ENCODE measurements at regions of chr1 and their contacts with region 1.

Region 1: DNA sequence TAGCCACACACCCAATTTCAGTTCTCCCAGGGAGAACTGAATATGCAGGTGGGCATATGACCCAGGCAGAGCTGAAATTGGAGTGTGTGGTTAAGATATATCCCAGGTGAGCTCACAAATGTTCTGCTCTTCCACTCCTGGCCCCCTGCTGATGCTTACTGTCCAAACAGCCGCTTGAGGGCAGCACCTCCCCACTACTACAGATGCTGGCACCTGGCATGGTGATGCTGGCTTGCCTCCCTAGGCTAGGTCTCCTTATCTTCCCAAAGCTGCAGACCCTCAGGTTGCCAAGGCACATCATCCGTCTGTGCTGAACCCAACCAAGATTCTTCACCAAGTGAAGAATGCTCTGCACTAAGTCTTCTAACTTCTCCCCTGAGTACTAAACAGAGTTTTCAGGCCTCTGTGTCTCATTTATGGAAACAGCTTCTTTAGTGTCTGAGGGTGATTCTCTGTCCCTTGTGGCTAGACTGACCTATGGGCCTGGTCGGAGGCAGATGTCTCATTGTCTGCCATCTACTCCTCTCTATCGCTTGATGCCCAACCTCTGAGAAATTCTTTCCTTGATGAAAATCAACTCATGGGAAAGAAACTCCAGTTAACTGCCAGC is 27.2 kb downstream of the XCL1 start:
- DNase-seq: peak; percentile 53 to 77 (median 54)
- H3K4me3 ChIP-seq: no peak overlapping the region
- H3K4me3 Mint-ChIP-seq: no peak overlapping the region
- H3K27ac ChIP-seq: no peak overlapping the region
- H3K27ac Mint-ChIP-seq: peak overlapping the region in 1 of 8 donors; percentile 22
- H3K4me1 ChIP-seq: no peaks in the 10 kb centered on the region
- H3K4me1 Mint-ChIP-seq: peaks cover 0 to 4% (median 0%) of the 10 kb centered on the region in 3 donors
- H3K27me3 ChIP-seq: no peaks in the 10 kb centered on the region
- H3K27me3 Mint-ChIP-seq: peaks cover 0 to 3% of the 10 kb centered on the region in 2 donors

Region 2: GRCh38 chr1:169348383-169349036 is 744.9 kb after region 1 on chr1:
- CTCF ChIA-PET with region 1: interaction called, 13 read pairs
- POLR2A ChIA-PET with region 1: no interaction called
- DNase-seq: peak in 4 of 5 donors; percentile 6 to 50 (median 42)
- H3K4me3 ChIP-seq: no peak overlapping the region
- H3K4me3 Mint-ChIP-seq: no peak overlapping the region
- H3K27ac ChIP-seq: no peak overlapping the region
- H3K27ac Mint-ChIP-seq: no peak overlapping the region
- H3K4me1 ChIP-seq: no peaks in the 10 kb centered on the region
- H3K4me1 Mint-ChIP-seq: peaks cover 1 to 18% (median 8%) of the 10 kb centered on the region in 3 donors
- H3K27me3 ChIP-seq: no peaks in the 10 kb centered on the region
- H3K27me3 Mint-ChIP-seq: no peaks in the 10 kb centered on the region

Region 3: DNA sequence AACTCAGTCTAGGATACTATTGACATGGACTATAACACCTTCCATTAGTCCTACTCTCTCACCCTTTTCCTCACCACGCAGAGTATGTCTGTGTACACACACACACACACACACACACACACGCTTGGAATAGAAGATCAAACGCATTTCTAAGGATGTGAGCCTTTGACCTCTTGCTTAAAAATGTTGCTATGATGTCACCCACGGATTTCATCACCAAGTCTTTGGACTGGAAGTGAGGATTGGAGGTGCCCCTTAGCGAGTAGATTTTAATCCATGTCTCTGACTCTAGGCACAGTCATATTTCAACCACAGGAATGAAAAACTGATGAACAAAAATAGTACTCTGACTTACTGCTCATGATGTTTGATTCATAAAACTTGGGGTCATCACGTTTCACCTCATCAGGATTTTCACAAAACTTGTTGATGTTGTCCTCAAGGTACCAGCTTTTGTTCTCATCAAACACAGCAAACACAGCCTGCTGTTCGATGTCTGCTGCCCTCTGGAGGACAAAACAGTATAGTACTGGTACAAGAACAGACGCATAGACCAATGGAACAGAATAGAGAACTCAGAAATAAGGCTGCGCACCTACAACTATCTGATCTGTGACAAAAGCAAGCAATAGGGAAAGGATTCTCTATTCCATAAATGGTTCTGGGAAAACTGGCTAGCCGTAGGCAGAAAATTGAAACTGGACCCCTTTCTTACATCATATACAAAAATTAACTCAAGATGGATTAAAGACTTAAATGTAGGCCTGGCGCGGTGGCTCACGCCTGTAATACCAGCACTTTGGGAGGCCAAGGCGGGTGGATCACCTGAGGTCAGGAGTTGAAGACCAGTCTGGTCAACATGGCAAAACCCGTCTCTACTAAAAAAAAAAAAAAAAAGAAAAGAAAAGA is 942.7 kb after region 1 on chr1:
- CTCF ChIA-PET with region 1: interaction called, 12 read pairs
- POLR2A ChIA-PET with region 1: no interaction called
- DNase-seq: peak; percentile 12 to 68 (median 60)
- H3K4me3 ChIP-seq: no peak overlapping the region
- H3K4me3 Mint-ChIP-seq: no peak overlapping the region
- H3K27ac ChIP-seq: no peak overlapping the region
- H3K27ac Mint-ChIP-seq: peak overlapping the region in 1 of 8 donors; percentile 34
- H3K4me1 ChIP-seq: no peaks in the 10 kb centered on the region
- H3K4me1 Mint-ChIP-seq: no peaks in the 10 kb centered on the region
- H3K27me3 ChIP-seq: no peaks in the 10 kb centered on the region
- H3K27me3 Mint-ChIP-seq: peaks cover 2 to 12% of the 10 kb centered on the region in 2 donors